IMR-90 (cell line): ENCODE measurements at regions of chr14 and their contacts with region 1.

Region 1: DNA sequence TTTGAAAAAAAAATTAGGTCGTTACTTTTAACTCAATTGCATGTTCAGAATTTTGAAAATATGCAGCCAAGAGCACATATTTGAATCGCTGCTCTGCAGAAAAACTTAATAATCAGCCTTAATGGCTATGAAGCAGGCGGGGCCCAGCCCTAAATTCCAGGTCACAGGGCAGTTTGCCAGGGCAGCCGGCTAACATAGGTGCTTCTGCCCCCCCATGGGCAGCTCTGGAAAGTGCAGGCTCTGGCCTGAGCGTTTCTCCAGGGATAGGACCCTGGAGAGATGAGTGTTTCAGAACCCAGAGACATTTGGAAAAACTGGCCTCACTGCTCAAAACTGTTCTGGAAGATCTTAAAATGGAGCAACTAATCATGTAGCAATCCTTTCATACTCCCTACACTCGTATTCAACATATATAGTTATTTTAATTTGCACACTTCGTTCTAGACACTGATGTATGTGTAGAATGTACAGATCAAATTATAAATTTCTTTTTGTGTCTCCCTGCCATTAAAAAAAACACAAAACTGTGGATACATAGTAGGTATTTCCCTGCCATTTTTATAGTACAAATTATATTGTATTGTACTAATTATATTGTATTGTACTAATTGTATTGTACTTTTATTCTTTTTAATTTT is 26.0 kb upstream of the PTGR2 start:
- DNase-seq: peak; percentile 78
- ATAC-seq: peak; percentile 98
- H3K4me3 ChIP-seq: no peak overlapping the region
- H3K27ac ChIP-seq: no peak overlapping the region
- H3K4me1 ChIP-seq: no peaks in the 10 kb centered on the region
- H3K27me3 ChIP-seq: no peaks in the 10 kb centered on the region; the same call in 1 of the 2 replicates
- CTCF ChIP-seq: peak; percentile 88
- POLR2A ChIP-seq: no peak
- RAD21 ChIP-seq: peak; percentile 89

Region 2: GRCh38 chr14:73424453-73424852 is 401.2 kb before region 1 on chr14:
- CTCF ChIA-PET with region 1: no interaction called
- POLR2A ChIA-PET with region 1: no interaction called
- dilution Hi-C with region 1: no loop called
- in situ Hi-C with region 1: no loop called
- intact Hi-C with region 1: no loop called
- DNase-seq: peak; percentile 36
- ATAC-seq: no peak
- H3K4me3 ChIP-seq: no peak overlapping the region
- H3K27ac ChIP-seq: no peak overlapping the region
- H3K4me1 ChIP-seq: peaks cover 12% of the 10 kb centered on the region
- H3K27me3 ChIP-seq: no peaks in the 10 kb centered on the region
- CTCF ChIP-seq: no peak
- POLR2A ChIP-seq: no peak
- RAD21 ChIP-seq: no peak

Region 3: DNA sequence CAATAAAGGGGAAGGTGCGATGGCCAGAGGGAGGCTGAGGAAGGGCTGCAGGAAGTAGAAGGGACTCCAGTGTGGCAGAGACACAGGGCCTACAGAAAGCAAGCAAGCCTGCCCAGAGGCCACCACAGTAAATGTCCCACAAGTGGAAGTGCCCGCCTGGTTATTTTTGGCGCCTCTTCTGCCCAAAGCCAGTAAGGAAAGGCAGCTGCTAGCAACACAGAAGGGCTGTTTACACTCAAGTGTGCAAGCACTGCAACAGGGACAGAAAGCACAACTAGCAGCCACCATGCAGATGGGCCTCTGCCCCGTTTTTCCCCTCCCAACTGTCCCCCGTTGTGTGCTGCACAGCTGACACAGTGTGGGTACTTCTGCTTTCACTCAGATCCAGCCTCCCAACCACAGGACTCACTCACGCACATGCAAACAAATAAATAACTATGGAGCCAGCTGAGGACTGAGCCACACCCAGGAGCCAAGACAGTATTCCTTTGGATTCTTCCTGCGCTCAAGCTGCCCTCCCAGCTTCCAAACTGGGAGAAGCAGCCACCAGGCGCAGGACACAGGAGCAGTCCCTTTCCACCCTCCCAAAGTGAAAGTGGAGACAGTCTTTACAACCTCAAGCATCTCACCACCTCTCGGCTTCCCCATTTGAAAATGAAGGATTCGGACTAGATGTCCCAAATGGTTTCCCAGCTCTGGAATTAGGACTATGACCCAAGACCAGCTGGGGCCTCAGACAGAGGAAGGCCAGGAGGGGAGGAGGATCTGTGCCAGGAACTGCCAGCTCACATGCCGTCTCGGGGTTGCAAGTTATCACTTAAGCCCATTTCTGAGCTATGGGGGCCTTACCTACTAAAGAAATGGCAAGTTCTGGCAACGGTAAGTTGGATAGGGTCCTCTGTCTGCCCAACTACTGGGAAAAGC is 71.4 kb before region 1 on chr14:
- CTCF ChIA-PET with region 1: interaction called, 4 read pairs
- POLR2A ChIA-PET with region 1: no interaction called
- dilution Hi-C with region 1: no loop called
- in situ Hi-C with region 1: loop called (anchors 5 kb)
- intact Hi-C with region 1: loop called (anchors 5 kb)
- DNase-seq: no peak
- ATAC-seq: no peak
- H3K4me3 ChIP-seq: no peak overlapping the region
- H3K27ac ChIP-seq: peak overlapping the region; percentile 53
- H3K4me1 ChIP-seq: peaks cover 70% of the 10 kb centered on the region
- H3K27me3 ChIP-seq: no peaks in the 10 kb centered on the region
- CTCF ChIP-seq: no peak
- POLR2A ChIP-seq: no peak
- RAD21 ChIP-seq: no peak

Region 4: GRCh38 chr14:73759714-73760597 is 65.7 kb before region 1 on chr14:
- CTCF ChIA-PET with region 1: interaction called, 4 read pairs
- POLR2A ChIA-PET with region 1: no interaction called
- dilution Hi-C with region 1: no loop called
- in situ Hi-C with region 1: no loop called
- intact Hi-C with region 1: loop called (anchors 2 kb)
- DNase-seq: peak; percentile 99
- ATAC-seq: peak; percentile 85
- H3K4me3 ChIP-seq: peak overlapping the region; percentile 89
- H3K27ac ChIP-seq: peak overlapping the region; percentile 80
- H3K4me1 ChIP-seq: peaks cover 45% of the 10 kb centered on the region
- H3K27me3 ChIP-seq: no peaks in the 10 kb centered on the region
- CTCF ChIP-seq: no peak
- POLR2A ChIP-seq: peak; percentile 87
- RAD21 ChIP-seq: peak; percentile 35